Testis (tissue), 5 donors: ENCODE measurements at regions of chr11 and their contacts with region 1.

Region 1: DNA sequence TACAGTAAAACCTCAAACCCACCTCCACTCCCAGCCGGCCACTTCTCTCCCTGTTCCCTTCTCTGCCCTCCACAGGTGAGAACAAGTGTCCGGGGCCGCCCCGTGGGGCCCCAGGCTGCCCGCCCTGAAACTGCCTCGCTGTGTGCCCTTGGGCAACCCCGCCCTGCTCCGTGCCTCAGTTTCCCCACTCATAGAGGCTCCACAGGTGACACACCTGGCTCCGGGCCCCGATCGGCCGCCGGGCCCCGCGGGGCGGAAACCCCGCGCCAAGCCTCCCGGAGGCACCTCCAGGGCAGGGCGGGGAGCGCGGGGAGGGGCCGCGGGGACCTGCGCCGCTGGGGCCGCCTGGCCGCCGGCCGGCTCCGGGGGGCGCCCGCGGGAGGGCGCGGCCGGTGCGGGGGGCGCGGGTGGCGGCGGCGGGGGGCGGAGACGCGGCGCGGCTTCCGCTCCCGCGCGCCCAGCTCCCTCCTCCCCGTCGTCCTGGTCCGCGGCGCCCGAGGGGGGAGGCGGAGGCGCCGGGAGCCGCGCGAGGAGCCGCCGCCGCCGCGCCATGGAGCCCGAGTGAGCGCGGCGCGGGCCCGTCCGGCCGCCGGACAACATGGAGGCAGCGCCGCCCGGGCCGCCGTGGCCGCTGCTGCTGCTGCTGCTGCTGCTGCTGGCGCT is at the start of gene LRP5:
- DNase-seq: no peak
- H3K4me3 ChIP-seq: peak within 1 kb of the TSS; percentile 54 to 68
- H3K27ac ChIP-seq: peak within 1 kb of the TSS in 1 of 2 donors; percentile 53
- H3K4me1 ChIP-seq: peaks cover 11% of the 10 kb centered on the region
- H3K27me3 ChIP-seq: no peaks in the 10 kb centered on the region
- CTCF ChIP-seq: no peak
- POLR2A ChIP-seq: no peak
- total RNA-seq, gene LRP5: 20.6 to 21.3 TPM

Region 2: GRCh38 chr11:68296344-68297051 is 15.8 kb before region 1 on chr11:
- intact Hi-C with region 1: no loop called
- DNase-seq: no peak
- H3K4me3 ChIP-seq: no peak overlapping the region
- H3K27ac ChIP-seq: no peak overlapping the region
- H3K4me1 ChIP-seq: peaks cover 6% of the 10 kb centered on the region
- H3K27me3 ChIP-seq: no peaks in the 10 kb centered on the region
- CTCF ChIP-seq: no peak
- POLR2A ChIP-seq: no peak

Region 3: DNA sequence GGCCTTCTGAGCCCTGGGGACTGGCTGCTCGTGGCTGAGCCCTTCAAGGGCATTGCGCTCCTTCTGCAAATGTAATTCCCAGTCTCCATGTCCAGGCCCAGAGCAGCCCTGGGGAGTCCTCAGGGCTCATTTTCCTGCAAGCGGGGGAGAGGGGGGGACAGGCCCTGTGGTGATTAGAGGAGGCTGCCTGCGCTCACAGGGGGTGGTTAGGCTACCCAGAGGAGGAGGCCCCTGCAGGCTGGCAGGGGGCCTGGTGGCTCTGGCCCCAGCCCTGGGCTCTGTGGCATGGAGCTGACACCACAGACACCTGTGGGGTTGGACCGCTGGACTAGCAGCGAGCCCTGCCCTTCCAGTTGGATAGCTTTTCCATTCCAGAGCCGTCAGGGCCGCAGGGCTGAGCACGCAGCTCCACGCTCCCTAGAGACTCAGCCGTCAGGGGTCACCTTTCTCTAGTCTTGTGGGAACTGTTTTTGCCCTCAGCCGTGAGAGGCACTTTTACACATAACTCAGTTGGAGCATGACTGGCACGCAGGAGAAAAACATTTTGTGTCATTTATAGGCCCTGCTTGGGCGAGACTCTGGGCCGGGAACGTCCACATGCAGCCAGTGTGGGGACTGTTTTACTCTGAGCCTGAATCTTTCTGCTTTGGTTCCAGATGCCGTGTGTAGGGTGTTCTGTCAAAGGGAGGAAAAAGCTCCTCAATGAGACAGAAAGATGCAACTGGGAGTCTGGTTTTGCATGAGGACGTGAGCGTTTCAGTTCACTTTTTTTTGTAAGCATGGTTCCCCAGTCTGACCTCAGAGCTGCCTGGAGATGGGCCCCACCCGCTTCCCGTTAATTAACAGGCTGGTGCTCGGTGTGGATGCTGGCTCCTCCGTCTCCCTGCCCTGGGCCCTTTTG is 58.2 kb after region 1 on chr11:
- intact Hi-C with region 1: loop called (anchors 10 kb)
- DNase-seq: peak; percentile 30
- H3K4me3 ChIP-seq: no peak overlapping the region
- H3K27ac ChIP-seq: peak overlapping the region in 1 of 2 donors; percentile 2
- H3K4me1 ChIP-seq: peaks cover 15% of the 10 kb centered on the region
- H3K27me3 ChIP-seq: no peaks in the 10 kb centered on the region
- CTCF ChIP-seq: no peak
- POLR2A ChIP-seq: no peak